Lower leg skin (tissue), 4 donors: ENCODE measurements at regions of chr7 and their contacts with region 1.

Region 1: DNA sequence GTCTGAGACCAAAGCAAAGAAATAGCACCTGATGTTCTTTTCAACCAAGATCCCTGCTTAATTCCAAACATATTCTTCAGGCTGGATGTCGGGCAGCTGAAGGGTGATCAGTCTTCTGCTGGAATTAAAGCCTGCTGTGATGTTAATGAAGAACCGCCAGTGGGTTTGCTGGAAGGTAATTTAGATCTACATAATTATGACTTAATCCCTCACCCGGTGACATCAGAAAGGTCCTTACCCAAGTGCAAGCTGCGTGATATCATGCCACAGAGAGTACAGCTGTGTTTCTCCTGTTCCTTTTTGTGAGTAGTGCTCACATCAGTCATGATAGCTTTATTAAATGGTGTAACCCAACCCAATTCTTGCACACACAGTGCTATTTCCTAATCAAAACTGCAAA is 29.1 kb upstream of the LRGUK start:
- DNase-seq: no peak
- H3K4me3 ChIP-seq: no peak overlapping the region
- CTCF ChIP-seq: no peak
- POLR2A ChIP-seq: no peak

Region 2: DNA sequence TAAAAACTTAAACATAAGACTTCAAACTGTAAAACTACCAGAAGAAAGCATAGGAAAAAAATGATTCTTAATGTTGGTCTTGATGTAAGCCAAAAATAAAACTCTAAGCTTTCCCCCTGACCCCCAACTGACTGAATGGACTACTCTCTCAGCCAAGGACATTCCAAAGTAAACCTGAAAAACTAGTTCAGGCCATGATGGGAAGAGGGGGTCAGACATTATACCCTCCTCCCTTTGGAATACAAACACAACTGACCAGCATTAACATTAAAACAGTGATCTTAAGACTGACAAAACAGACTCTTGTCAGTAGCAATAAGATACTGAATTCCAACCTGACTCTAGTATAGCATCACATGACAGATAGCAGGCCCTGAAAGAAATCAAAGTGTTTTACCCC is 15.6 kb after region 1 on chr7:
- intact Hi-C with region 1: loop called (anchors 2 kb)
- DNase-seq: no peak
- H3K4me3 ChIP-seq: no peak overlapping the region
- CTCF ChIP-seq: no peak
- POLR2A ChIP-seq: no peak